Activated CD8-positive, alpha-beta T cell treated with anti-CD3 and anti-CD28 coated beads for 36 hours (primary cell): ENCODE measurements at regions of chr16 and their contacts with region 1.

Region 1: DNA sequence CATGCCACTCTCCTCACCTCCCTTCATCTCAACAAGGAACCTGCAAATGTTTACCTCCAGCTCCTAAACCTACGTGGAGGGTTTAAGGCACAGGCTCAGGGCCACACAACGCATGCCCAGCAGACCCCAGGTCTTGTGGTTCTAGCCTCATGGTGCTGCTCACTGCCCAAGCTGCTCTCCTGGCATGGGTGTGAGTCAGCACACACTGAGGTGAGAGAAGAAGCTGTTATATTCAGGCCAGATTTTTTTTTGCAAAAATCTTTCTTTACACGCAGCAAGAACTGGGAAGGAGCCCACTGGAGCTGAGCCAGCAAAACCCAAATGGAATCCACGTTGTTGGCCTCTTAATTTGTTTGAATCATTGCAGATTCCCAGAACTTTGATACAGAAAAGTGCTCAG is 5.5 kb upstream of the C16orf96 start:
- DNase-seq: no peak
- ATAC-seq: no peak
- H3K4me3 Mint-ChIP-seq: no peak overlapping the region
- H3K27ac Mint-ChIP-seq: no peak overlapping the region
- H3K4me1 Mint-ChIP-seq: peaks cover 3% of the 10 kb centered on the region
- H3K27me3 Mint-ChIP-seq: no peaks in the 10 kb centered on the region
- CTCF ChIP-seq: no peak

Region 2: GRCh38 chr16:4500272-4500671 is 50.3 kb before region 1 on chr16:
- CTCF ChIA-PET with region 1: interaction called, 174 read pairs
- POLR2A ChIA-PET with region 1: interaction called, 9 read pairs
- intact Hi-C with region 1: no loop called
- DNase-seq: peak; percentile 25
- ATAC-seq: peak; percentile 77
- H3K4me3 Mint-ChIP-seq: no peak overlapping the region
- H3K27ac Mint-ChIP-seq: no peak overlapping the region
- H3K4me1 Mint-ChIP-seq: peaks cover 81% of the 10 kb centered on the region
- H3K27me3 Mint-ChIP-seq: no peaks in the 10 kb centered on the region
- CTCF ChIP-seq: no peak

Region 3: DNA sequence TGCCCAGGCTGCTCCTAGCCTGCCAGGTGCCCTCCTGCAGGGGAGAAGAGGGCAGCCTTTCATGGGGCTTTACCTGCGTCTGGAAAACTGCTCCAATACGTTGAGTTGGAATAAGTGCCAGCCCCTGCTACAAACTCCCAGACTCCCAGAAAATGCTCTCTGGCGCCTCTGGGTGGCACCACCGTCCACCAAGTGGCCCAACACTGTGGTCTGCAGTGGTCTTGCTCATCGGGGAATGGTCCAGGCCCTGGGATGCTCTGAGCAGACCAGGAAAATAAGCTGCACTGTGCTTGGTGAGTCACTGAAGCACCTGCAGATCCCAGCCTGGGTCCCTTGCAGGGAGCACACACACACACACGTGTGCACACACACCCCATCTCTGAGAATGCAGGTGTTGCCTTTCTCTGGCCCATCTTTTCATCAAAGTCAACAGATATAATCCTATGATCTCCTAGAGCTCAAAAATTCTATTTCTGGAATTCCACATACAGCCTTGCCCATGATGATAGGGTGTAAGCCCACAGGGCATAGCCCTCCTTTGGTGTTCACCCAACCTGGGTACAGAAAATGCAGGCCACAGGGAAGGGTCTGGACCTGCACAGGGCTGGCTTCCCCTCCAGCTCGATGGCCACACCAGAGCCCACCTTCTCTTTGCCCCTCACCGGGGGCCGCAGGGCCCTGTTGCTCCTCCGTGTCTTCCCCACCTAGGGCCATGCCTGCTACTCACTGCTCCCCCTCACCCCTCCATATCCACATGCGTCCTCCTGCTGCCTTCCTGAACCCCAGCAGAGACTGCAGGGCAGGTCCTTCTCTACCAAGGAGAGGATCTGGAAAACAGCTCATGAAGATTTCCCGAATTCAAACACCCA is 32.5 kb before region 1 on chr16:
- CTCF ChIA-PET with region 1: interaction called, 23 read pairs
- POLR2A ChIA-PET with region 1: interaction called, 3 read pairs
- intact Hi-C with region 1: no loop called
- DNase-seq: peak; percentile 27
- ATAC-seq: no peak
- H3K4me3 Mint-ChIP-seq: no peak overlapping the region
- H3K27ac Mint-ChIP-seq: no peak overlapping the region
- H3K4me1 Mint-ChIP-seq: peaks cover 35% of the 10 kb centered on the region
- H3K27me3 Mint-ChIP-seq: no peaks in the 10 kb centered on the region
- CTCF ChIP-seq: peak; percentile 49

Region 4: GRCh38 chr16:4529085-4530060 is 21.2 kb before region 1 on chr16:
- CTCF ChIA-PET with region 1: interaction called, 10 read pairs
- POLR2A ChIA-PET with region 1: interaction called, 3 read pairs
- intact Hi-C with region 1: no loop called
- DNase-seq: peak; percentile 54
- ATAC-seq: peak; percentile 82
- H3K4me3 Mint-ChIP-seq: peak overlapping the region; percentile 34
- H3K27ac Mint-ChIP-seq: peak overlapping the region; percentile 96
- H3K4me1 Mint-ChIP-seq: peaks cover 45% of the 10 kb centered on the region
- H3K27me3 Mint-ChIP-seq: no peaks in the 10 kb centered on the region
- CTCF ChIP-seq: no peak

Region 5: GRCh38 chr16:4538350-4539235 is 12.0 kb before region 1 on chr16 and contains the start of gene CDIP1:
- CTCF ChIA-PET with region 1: interaction called, 13 read pairs
- POLR2A ChIA-PET with region 1: interaction called, 4 read pairs
- intact Hi-C with region 1: no loop called
- DNase-seq: peak; percentile 99
- ATAC-seq: peak; percentile 83
- H3K4me3 Mint-ChIP-seq: peak within 1 kb of the TSS; percentile 62
- H3K27ac Mint-ChIP-seq: peak within 1 kb of the TSS; percentile 82
- H3K4me1 Mint-ChIP-seq: peaks cover 37% of the 10 kb centered on the region
- H3K27me3 Mint-ChIP-seq: no peaks in the 10 kb centered on the region
- CTCF ChIP-seq: no peak
- total RNA-seq, gene CDIP1: 31.9 to 32.2 TPM

Region 6: DNA sequence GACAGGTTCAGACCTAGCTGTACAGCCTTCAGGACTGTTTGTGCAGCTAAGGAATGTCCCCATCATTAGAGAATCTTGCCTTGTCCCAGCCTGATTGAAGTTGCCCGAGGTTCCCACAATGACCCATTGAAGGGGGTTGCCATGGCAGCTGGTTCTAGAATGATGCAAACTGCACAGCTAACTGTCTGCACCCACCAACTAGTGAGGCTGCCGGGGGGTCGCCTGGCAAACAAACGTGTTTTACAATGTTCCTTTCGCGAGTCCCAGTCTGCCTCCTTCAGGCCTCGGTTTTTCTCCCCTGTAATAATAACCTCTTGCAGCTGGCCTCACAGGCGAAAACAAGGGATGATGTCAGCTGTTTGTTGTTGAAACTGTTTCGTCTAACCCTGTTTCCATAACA is 11.0 kb after region 1 on chr16:
- CTCF ChIA-PET with region 1: interaction called, 10 read pairs
- POLR2A ChIA-PET with region 1: no interaction called
- intact Hi-C with region 1: no loop called
- DNase-seq: no peak
- ATAC-seq: no peak
- H3K4me3 Mint-ChIP-seq: no peak overlapping the region
- H3K27ac Mint-ChIP-seq: no peak overlapping the region
- H3K4me1 Mint-ChIP-seq: peaks cover 3% of the 10 kb centered on the region
- H3K27me3 Mint-ChIP-seq: no peaks in the 10 kb centered on the region
- CTCF ChIP-seq: no peak

Region 7: DNA sequence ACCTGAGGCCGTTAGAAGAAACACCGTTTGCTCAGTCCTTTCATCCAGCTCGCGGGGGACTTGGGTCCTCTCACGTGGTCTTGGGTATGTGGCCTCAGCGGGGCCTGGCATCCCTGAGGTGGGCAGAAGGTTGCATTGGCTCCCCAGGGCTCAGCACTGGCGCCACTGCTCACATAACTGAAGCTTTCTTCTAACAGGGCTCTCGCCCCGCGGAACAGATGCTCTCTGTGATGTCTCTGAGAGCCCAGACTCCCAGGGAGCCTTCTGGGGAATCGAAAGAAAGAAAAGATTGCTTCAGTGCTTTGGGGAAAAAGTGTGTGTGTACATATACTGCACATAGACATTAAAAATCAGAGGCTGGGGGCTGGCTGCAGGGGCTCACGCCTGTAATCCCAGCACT is 84.2 kb after region 1 on chr16:
- CTCF ChIA-PET with region 1: no interaction called
- POLR2A ChIA-PET with region 1: no interaction called
- intact Hi-C with region 1: no loop called
- DNase-seq: no peak
- ATAC-seq: no peak
- H3K4me3 Mint-ChIP-seq: no peak overlapping the region
- H3K27ac Mint-ChIP-seq: no peak overlapping the region
- H3K4me1 Mint-ChIP-seq: peaks cover 20% of the 10 kb centered on the region
- H3K27me3 Mint-ChIP-seq: no peaks in the 10 kb centered on the region
- CTCF ChIP-seq: no peak